Gastrocnemius medialis (tissue), 4 donors: ENCODE measurements at regions of chr12 and their contacts with region 1.

Region 1: GRCh38 chr12:57520053-57520871 is at the start of gene DDIT3:
- DNase-seq: peak; percentile 99 to 100
- ATAC-seq: peak; percentile 59 to 70
- H3K4me3 ChIP-seq: peak within 1 kb of the TSS; percentile 79 to 87 (median 82)
- H3K27ac ChIP-seq: peak within 1 kb of the TSS; percentile 93 to 99 (median 96)
- H3K4me1 ChIP-seq: peaks cover 56 to 61% of the 10 kb centered on the region in 2 donors
- H3K27me3 ChIP-seq: no peaks in the 10 kb centered on the region
- CTCF ChIP-seq: no peak
- POLR2A ChIP-seq: peak; percentile 99
- total RNA-seq, gene DDIT3: 11.8 to 46.4 (median 17.1) TPM

Region 2: DNA sequence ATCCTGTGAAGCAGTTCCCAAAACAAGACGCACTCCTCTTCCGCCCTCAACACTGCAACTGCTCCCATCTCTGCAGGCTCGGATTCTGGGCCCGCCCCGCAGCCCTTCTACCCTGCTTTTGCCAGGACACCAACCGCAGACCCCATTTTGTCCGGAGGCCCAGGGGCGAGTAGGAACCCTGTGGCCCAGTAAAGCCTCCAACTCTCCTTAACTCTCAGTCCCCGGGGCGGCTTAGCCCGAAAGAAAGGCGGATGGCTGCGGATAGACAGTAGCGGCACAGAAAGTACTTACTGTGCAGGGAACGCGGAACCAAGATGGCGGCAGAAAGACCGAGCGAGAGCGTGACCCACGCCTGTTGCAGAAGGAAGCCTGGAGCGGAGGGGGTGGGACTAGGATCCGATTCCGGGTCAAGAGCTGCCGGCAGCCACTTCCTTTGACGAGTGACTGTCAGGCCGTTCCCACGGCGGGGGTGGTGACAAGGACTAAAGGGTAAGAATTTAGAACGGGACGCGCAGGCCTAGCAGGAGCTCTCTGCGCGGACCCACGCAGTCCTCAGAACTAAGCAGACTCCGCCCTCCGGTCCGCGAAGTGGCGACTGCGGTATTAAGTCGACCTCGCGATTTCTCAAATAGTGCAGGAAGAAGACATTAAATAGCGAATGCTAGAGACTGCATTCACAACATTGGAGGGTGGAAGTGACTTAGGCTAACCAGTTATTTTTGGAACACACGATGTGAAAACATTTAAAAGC is 795.1 kb before region 1 on chr12 and contains the start of gene NACA:
- in situ Hi-C with region 1: no loop called
- intact Hi-C with region 1: loop called (anchors 2 kb)
- DNase-seq: peak; percentile 99
- ATAC-seq: peak; percentile 85 to 87
- H3K4me3 ChIP-seq: peak within 1 kb of the TSS; percentile 78 to 99 (median 84)
- H3K27ac ChIP-seq: peak within 1 kb of the TSS; percentile 95 to 98 (median 96)
- H3K4me1 ChIP-seq: peaks cover 33 to 43% of the 10 kb centered on the region in 2 donors
- H3K27me3 ChIP-seq: no peaks in the 10 kb centered on the region
- CTCF ChIP-seq: no peak
- POLR2A ChIP-seq: peak; percentile 97 to 98
- total RNA-seq, gene NACA: 225 to 438 (median 398) TPM

Region 3: DNA sequence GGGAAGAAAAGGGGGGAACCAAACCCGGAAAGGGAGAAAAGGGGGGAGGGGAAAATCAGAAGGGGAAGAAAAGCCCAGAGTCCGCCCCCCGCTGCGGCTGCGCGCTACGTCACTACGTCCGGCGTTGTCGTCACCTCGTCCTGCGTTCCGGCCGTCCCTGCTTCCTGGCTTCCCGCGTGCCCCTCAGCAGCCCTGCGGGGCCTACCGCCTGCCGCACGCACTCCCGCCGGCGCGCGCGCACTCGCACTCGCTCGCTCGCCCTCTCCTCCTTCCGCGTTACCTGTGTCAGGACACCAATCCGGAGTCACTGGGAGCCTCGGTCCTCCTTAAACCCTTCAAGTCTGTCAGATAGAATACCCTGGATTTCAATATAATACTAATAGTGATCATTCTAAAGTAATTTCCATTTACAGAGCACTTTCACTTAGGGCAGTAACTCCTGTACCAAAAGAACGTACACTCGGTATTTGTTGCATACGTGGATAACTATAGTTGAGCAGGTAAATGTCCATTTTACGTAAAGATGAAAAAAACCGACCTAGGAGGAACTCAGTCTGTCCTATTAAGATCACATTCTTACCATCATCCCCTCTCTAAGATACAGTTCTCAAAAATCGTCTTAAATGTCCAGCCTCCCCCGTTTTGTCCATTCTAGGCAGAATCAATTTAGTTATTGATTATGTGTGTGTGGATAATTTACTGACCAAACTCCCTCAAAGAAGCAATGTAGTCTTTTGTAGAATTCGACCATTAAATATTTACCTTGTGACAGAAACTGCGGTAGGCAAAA is 89.1 kb before region 1 on chr12 and contains the start of gene R3HDM2:
- in situ Hi-C with region 1: no loop called
- intact Hi-C with region 1: loop called (anchors 1 kb)
- DNase-seq: peak; percentile 93 to 95
- ATAC-seq: peak; percentile 96 to 98
- H3K4me3 ChIP-seq: peak within 1 kb of the TSS; percentile 66 to 92 (median 70)
- H3K27ac ChIP-seq: peak within 1 kb of the TSS; percentile 91 to 95 (median 95)
- H3K4me1 ChIP-seq: peaks cover 6 to 14% of the 10 kb centered on the region in 2 donors
- H3K27me3 ChIP-seq: no peaks in the 10 kb centered on the region
- CTCF ChIP-seq: no peak
- POLR2A ChIP-seq: peak; percentile 93
- total RNA-seq, gene R3HDM2: 24.1 to 27.1 (median 25.6) TPM

Region 4: GRCh38 chr12:57546438-57547383 is 26.4 kb after region 1 on chr12 and contains the start of gene DCTN2:
- in situ Hi-C with region 1: no loop called
- intact Hi-C with region 1: loop called (anchors 1 kb)
- DNase-seq: peak; percentile 96 to 97
- ATAC-seq: peak; percentile 95 to 98
- H3K4me3 ChIP-seq: peak within 1 kb of the TSS; percentile 76 to 95 (median 91)
- H3K27ac ChIP-seq: peak within 1 kb of the TSS; percentile 87 to 94 (median 91)
- H3K4me1 ChIP-seq: peaks cover 18 to 19% of the 10 kb centered on the region in 2 donors
- H3K27me3 ChIP-seq: peaks cover 18 to 31% (median 21%) of the 10 kb centered on the region in 3 donors
- CTCF ChIP-seq: peak in 1 of 5 experiments; percentile 11
- POLR2A ChIP-seq: peak; percentile 48 to 57
- total RNA-seq, gene DCTN2: 147 to 265 (median 177) TPM

Region 5: GRCh38 chr12:57846577-57847319 is 326.5 kb after region 1 on chr12 and contains the start of gene CTDSP2:
- in situ Hi-C with region 1: no loop called
- intact Hi-C with region 1: loop called (anchors 5 kb)
- DNase-seq: peak; percentile 100
- ATAC-seq: peak; percentile 58 to 60
- H3K4me3 ChIP-seq: peak within 1 kb of the TSS; percentile 82 to 98 (median 96)
- H3K27ac ChIP-seq: peak within 1 kb of the TSS; percentile 93 to 99 (median 98)
- H3K4me1 ChIP-seq: peaks cover 69% of the 10 kb centered on the region in 2 donors
- H3K27me3 ChIP-seq: no peaks in the 10 kb centered on the region
- CTCF ChIP-seq: peak in 1 of 5 experiments; percentile 24
- POLR2A ChIP-seq: peak; percentile 82 to 98
- total RNA-seq, gene CTDSP2: 66.0 to 116 (median 83.4) TPM